Panc1 (cell line): ENCODE measurements at regions of chr2 and their contacts with region 1.

Region 1: DNA sequence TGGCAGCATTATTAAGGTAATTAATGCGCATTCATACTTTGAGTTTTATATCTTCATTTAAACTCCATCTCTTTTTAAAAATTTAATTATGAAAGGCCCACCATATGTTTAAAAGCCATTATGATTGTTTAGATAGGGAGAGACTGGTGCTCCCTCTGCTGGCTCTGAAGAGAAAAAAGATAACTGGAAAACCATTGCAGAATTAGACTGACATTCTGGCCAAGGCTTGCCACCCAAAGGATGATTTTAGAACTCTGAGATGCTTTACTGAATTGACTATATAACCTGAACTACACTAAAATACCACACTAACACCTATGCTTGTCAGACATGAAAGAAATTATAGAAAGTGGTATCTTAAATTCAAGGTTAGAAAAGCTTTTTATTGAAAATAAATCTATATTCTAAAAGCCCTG is 127.6 kb upstream of the SPOPL start:
- DNase-seq: peak; percentile 27
- ATAC-seq: no peak
- H3K4me3 ChIP-seq: no peak overlapping the region
- H3K27ac ChIP-seq: no peak overlapping the region
- H3K4me1 ChIP-seq: no peaks in the 10 kb centered on the region
- H3K27me3 ChIP-seq: no peaks in the 10 kb centered on the region
- CTCF ChIP-seq: peak; percentile 74; the same call in 1 of the 2 replicates

Region 2: DNA sequence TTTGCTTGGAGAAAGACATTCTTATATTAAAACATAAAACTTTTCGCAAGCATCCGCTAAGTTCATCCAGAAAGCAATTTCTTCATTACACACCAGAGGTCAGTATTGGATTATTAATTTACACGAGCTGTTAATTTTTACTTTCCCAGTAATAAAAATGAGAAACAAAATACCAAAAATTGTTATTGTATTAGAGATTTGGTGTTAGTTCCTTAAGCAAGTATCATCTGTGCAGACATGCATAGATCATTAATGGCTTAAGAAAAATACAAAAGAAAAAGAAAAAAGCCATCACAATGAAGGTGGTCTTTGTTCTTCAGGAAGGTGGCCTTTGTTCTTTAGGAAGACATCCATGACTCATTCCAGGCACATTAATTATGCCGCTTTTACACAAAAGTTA is 463.4 kb before region 1 on chr2:
- CTCF ChIA-PET with region 1: no interaction called
- POLR2A ChIA-PET with region 1: no interaction called
- in situ Hi-C with region 1: no loop called
- intact Hi-C with region 1: loop called (anchors 5 kb)
- DNase-seq: no peak
- ATAC-seq: no peak
- H3K4me3 ChIP-seq: no peak overlapping the region
- H3K27ac ChIP-seq: no peak overlapping the region
- H3K4me1 ChIP-seq: no peaks in the 10 kb centered on the region
- H3K27me3 ChIP-seq: no peaks in the 10 kb centered on the region
- CTCF ChIP-seq: peak; percentile 57; the same call in 1 of the 2 replicates

Region 3: DNA sequence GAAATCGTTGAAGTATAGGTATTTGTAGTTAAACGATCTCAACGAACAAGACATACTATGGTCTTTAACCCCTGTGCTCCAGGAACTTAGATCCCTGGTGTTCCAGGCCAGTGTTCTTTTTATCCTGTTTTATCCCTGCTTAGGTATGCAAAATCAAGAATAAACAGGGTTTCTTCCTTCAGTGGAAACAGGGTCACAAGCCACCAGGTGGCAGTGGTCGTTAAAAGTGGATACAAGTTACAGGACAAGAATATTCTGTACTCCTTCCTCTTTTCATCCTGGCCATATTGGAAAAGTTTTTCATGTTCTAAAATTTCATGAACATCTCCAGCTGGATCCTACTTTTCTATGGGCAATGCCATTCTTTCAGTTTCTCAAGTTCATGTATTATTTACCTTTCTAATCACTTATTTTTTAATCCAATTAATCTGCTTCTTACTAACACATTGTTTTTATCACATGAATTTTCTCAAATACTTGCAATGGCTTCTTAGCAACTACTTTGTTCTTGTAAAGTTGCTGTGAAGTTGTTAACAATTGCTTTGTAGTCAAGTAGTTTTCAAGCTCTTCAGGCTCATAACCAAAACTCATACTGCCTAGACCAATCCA is 426.2 kb before region 1 on chr2:
- CTCF ChIA-PET with region 1: no interaction called
- POLR2A ChIA-PET with region 1: no interaction called
- in situ Hi-C with region 1: no loop called
- intact Hi-C with region 1: loop called (anchors 10 kb)
- DNase-seq: no peak
- ATAC-seq: peak; percentile 76
- H3K4me3 ChIP-seq: no peak overlapping the region
- H3K27ac ChIP-seq: no peak overlapping the region
- H3K4me1 ChIP-seq: peaks cover 5% of the 10 kb centered on the region; the same call in 1 of the 2 replicates
- H3K27me3 ChIP-seq: no peaks in the 10 kb centered on the region
- CTCF ChIP-seq: peak; percentile 69; the same call in 1 of the 2 replicates

Region 4: GRCh38 chr2:138610216-138610953 is 236.4 kb after region 1 on chr2:
- CTCF ChIA-PET with region 1: no interaction called
- POLR2A ChIA-PET with region 1: no interaction called
- in situ Hi-C with region 1: no loop called
- intact Hi-C with region 1: no loop called
- DNase-seq: no peak
- ATAC-seq: no peak
- H3K4me3 ChIP-seq: no peak overlapping the region
- H3K27ac ChIP-seq: no peak overlapping the region
- H3K4me1 ChIP-seq: no peaks in the 10 kb centered on the region
- H3K27me3 ChIP-seq: no peaks in the 10 kb centered on the region
- CTCF ChIP-seq: no peak

Region 5: GRCh38 chr2:138787053-138787666 is 413.2 kb after region 1 on chr2:
- CTCF ChIA-PET with region 1: no interaction called
- POLR2A ChIA-PET with region 1: no interaction called
- in situ Hi-C with region 1: no loop called
- intact Hi-C with region 1: loop called (anchors 10 kb)
- DNase-seq: peak; percentile 18
- ATAC-seq: no peak
- H3K4me3 ChIP-seq: no peak overlapping the region
- H3K27ac ChIP-seq: no peak overlapping the region
- H3K4me1 ChIP-seq: no peaks in the 10 kb centered on the region
- H3K27me3 ChIP-seq: no peaks in the 10 kb centered on the region
- CTCF ChIP-seq: peak; percentile 75

Region 6: DNA sequence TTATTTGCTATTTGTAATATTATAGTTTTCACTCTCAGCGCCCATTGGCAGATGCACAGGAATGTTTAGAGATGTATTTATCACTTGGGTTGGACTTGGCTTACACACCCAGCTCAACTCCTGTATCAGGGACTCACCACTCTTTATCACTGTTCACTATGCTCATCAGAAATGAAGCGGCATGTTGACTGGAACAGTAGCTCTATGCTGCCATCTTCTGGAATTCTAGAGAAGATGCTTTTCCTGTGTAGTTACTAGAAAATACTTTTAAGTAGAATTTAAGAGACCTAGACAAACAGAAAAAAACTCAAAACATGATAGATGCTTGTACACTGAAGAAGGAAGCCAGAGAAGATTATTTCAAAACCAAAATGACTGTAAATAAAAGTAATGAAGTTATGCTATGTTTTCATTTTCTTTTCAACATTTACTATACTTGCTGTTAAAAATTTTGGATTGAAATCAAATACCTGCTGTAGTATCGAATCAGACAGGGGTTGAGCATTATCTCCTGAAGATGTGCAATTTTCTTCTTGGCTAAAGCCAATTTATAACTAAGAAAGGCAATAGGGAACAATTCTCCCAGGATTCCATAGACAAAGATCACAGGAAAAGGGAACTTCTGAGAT is 453.5 kb after region 1 on chr2:
- CTCF ChIA-PET with region 1: no interaction called
- POLR2A ChIA-PET with region 1: no interaction called
- in situ Hi-C with region 1: no loop called
- intact Hi-C with region 1: loop called (anchors 10 kb)
- DNase-seq: no peak
- ATAC-seq: peak; percentile 77
- H3K4me3 ChIP-seq: no peak overlapping the region
- H3K27ac ChIP-seq: no peak overlapping the region
- H3K4me1 ChIP-seq: no peaks in the 10 kb centered on the region; the same call in 1 of the 2 replicates
- H3K27me3 ChIP-seq: no peaks in the 10 kb centered on the region; the same call in 1 of the 2 replicates
- CTCF ChIP-seq: peak; percentile 78